GM12878 (cell line): ENCODE measurements at regions of chr18 and their contacts with region 1.

Region 1: DNA sequence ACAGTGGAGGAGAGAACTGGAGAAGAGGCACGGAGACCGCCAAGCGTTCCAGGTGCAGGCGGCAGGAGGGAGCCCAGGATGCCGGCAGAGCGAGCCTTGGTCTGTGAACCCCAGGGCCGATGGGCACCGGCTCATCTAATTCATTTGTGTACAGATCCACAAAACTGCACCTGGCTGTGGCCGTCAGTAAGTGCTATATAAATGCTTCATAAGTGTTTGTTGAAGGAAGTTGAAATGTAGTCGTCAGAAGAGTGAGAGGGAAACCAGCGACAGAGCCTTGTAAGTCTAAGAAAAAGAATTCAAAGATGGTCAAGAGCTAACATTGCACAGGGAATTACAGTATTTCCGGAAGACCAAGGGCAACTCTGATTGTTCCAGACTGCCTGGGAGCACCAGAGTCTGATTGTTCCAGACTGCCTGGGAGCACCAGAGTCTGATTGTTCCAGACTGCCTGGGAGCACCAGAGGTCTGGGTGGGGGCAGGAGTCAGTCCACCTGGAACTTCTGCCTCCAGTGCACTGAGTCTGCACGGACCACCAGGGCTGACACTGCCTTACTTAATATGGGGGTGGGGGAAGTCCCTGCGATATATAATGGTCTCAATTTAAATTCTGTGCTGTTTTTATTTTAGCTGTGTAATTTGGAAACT is 112.3 kb downstream of the BCL2 start:
- DNase-seq: no peak
- ATAC-seq: peak; percentile 64
- H3K4me3 ChIP-seq: peak overlapping the region; percentile 50; the same call in 1 of the 2 replicates
- H3K27ac ChIP-seq: peak overlapping the region; percentile 53
- H3K4me1 ChIP-seq: peaks cover 56% of the 10 kb centered on the region
- H3K27me3 ChIP-seq: no peaks in the 10 kb centered on the region
- CTCF ChIP-seq: no peak
- EP300 ChIP-seq: no peak
- POLR2A ChIP-seq: no peak
- RAD21 ChIP-seq: no peak

Region 2: DNA sequence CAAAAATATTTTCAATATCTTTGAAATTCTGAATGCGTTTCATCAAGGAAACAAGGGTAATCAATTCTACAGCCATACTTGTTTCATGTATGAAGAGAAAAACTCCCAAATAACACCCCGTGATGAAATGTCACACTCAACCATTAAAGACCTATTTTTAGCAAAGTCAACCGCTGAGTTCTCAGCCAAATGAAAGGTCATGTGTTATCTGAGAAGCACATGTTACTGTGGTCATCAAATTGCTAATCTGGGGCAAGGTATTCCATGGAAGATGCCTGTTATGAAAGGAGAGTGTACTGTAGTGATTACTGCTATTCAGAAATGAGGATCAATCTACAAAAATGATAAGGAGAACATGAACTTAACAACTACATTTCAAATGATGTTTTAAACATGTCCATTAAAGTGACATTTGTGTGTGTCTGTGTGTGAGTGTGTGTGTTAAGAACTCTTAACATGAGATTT is 14.3 kb before region 1 on chr18:
- CTCF ChIA-PET with region 1: interaction called, 5 read pairs
- POLR2A ChIA-PET with region 1: interaction called, 3 read pairs
- RAD21 ChIA-PET with region 1: interaction called, 3 read pairs
- SMC1A ChIA-PET with region 1: interaction called, 39 read pairs
- in situ Hi-C with region 1: no loop called
- intact Hi-C with region 1: no loop called
- DNase-seq: peak; percentile 72
- ATAC-seq: peak; percentile 75
- H3K4me3 ChIP-seq: no peak overlapping the region
- H3K27ac ChIP-seq: peak overlapping the region; percentile 51
- H3K4me1 ChIP-seq: peaks cover 27% of the 10 kb centered on the region
- H3K27me3 ChIP-seq: no peaks in the 10 kb centered on the region
- CTCF ChIP-seq: no peak
- EP300 ChIP-seq: peak; percentile 85 to 86
- POLR2A ChIP-seq: no peak
- RAD21 ChIP-seq: no peak